ENCODE measurements at regions of chr6 and their contacts with region 1.

Region 1: DNA sequence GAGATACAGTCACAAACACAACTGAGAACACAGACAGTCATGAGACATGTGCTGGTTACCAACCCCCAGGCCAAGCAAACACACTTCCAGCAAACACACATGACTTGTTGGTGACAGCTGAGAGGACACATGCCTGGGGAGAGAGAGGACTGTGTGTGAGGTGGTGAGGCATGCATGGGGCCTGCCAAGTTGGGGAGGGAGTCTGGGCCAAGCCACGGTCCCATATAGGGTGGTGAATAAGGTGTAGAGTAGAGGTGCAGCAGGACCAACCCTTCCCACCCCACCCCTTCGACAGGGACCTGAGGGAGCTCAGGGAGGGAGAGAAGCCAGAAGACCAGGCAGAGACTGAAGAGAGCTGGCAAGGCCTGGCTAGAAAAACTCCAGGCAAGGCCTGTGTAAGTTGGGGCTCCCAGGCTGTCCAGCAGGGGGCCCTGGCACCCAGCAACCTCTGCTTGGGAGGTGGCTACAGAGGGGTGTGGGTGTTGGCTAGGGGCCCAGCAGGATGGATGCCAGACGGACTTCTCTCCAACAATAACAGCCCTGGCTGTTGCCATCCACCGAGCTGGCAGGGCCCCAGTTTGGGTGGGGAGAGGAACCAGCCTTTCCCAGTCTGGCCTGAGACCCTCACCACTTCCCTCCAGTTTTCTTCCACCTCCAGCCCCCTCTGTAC is 2.0 kb upstream of the SLC29A1 start:
- DNase-seq: peak; percentile 53 to 85 (median 72)
- ATAC-seq: peak; percentile 60
- H3K4me3 ChIP-seq: no peak overlapping the region
- H3K4me3 Mint-ChIP-seq: no peak overlapping the region
- H3K27ac ChIP-seq: no peak overlapping the region
- H3K27ac Mint-ChIP-seq: no peak overlapping the region
- H3K4me1 ChIP-seq: peaks cover 28% of the 10 kb centered on the region
- H3K4me1 Mint-ChIP-seq: peaks cover 41% of the 10 kb centered on the region
- H3K27me3 ChIP-seq: peaks cover 0 to 8% of the 10 kb centered on the region in 2 experiments
- H3K27me3 Mint-ChIP-seq: peaks cover 3% of the 10 kb centered on the region
- CTCF ChIP-seq: peak; percentile 47

Region 2: DNA sequence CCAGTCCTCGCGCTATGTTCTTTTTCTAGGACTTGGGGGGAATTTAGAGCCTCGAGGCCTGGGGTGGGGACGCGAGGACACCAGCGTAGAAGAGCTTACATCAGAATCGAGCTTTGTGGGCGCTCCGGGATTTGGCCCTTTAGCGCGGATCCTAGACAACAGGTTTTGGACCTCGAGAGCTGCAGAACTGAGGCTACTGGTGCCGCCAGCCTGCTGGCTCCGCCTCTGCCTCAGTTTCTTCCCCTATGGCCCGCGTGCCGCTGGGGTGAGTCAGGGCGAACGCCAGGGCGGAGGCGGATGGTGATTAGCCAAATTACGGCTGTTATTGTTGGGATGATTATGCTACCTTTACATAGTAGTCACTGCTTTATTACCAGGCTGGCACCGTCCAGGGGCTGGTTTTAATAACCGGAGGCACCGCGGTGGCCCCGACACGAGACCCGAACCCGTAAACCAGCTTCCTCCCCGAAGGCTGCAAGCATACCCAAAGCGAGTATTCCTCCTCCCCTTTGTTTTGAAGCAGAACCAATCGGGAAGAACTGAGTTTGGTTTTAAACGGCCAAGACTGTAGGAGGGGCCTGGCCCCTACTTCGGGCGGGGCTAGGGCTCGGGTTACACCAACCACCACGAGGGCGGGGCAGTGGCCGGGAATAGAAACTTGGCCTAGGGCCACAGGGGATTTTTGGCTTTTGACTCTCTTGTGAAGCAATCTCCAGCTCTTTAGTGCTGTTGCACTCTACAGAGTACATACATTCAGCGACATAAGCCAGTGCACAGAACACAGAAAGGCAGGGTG is 591.7 kb before region 1 on chr6:
- CTCF ChIA-PET with region 1: no interaction called
- POLR2A ChIA-PET with region 1: no interaction called
- intact Hi-C with region 1: loop called in 1 of 2 experiments (anchors 10 kb)
- DNase-seq: peak; percentile 66 to 96 (median 84)
- ATAC-seq: peak; percentile 51
- H3K4me3 ChIP-seq: peak overlapping the region; percentile 77 to 82
- H3K4me3 Mint-ChIP-seq: peak overlapping the region; percentile 98
- H3K27ac ChIP-seq: peak overlapping the region; percentile 53 to 75
- H3K27ac Mint-ChIP-seq: peak overlapping the region; percentile 95
- H3K4me1 ChIP-seq: peaks cover 15% of the 10 kb centered on the region
- H3K4me1 Mint-ChIP-seq: peaks cover 39% of the 10 kb centered on the region
- H3K27me3 ChIP-seq: no peaks in the 10 kb centered on the region
- H3K27me3 Mint-ChIP-seq: no peaks in the 10 kb centered on the region
- CTCF ChIP-seq: no peak

Region 3: GRCh38 chr6:44237813-44238433 is 16.5 kb after region 1 on chr6:
- CTCF ChIA-PET with region 1: interaction called, 23 read pairs
- POLR2A ChIA-PET with region 1: interaction called, 4 read pairs
- intact Hi-C with region 1: loop called (anchors 1 kb)
- DNase-seq: peak; percentile 62 to 89 (median 77)
- ATAC-seq: peak; percentile 91
- H3K4me3 ChIP-seq: peak overlapping the region; percentile 76 to 98
- H3K4me3 Mint-ChIP-seq: peak overlapping the region; percentile 88
- H3K27ac ChIP-seq: peak overlapping the region; percentile 88 to 95
- H3K27ac Mint-ChIP-seq: peak overlapping the region; percentile 93
- H3K4me1 ChIP-seq: peaks cover 12% of the 10 kb centered on the region
- H3K4me1 Mint-ChIP-seq: peaks cover 11% of the 10 kb centered on the region
- H3K27me3 ChIP-seq: no peaks in the 10 kb centered on the region
- H3K27me3 Mint-ChIP-seq: no peaks in the 10 kb centered on the region
- CTCF ChIP-seq: peak; percentile 93

Region 4: DNA sequence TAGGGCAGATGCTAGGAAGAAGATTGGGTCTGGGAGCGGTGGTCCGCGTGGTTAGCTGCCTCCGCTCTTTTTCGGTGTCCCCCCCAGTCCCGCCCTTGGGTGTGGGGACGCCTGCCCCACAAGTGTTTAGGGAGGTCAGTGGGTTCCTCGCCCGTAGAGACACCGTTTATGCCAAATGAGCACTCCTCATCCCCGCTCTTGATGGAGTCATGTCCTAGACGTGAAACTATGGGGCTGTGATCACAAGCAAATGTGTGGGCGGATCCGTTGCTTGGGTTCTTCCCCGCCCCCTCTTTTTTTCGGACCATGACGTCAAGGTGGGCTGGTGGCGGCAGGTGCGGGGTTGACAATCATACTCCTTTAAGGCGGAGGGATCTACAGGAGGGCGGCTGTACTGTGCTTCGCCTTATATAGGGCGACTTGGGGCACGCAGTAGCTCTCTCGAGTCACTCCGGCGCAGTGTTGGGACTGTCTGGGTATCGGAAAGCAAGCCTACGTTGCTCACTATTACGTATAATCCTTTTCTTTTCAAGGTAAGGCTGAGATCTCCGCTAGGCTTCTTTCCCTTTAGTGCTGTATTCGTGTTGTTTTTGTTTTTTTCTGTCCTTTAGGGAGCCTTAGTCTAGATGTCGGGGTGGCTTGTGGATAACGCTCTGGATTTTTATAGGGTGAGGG is 25.4 kb after region 1 on chr6 and contains the start of gene HSP90AB1:
- CTCF ChIA-PET with region 1: interaction called, 10 read pairs
- POLR2A ChIA-PET with region 1: interaction called, 59 read pairs
- intact Hi-C with region 1: loop called (anchors 1 kb)
- DNase-seq: peak; percentile 89 to 99 (median 94)
- ATAC-seq: peak; percentile 79
- H3K4me3 ChIP-seq: peak within 1 kb of the TSS; percentile 96 to 98
- H3K4me3 Mint-ChIP-seq: peak within 1 kb of the TSS; percentile 99
- H3K27ac ChIP-seq: peak within 1 kb of the TSS; percentile 95 to 96
- H3K27ac Mint-ChIP-seq: peak within 1 kb of the TSS; percentile 98
- H3K4me1 ChIP-seq: peaks cover 26% of the 10 kb centered on the region
- H3K4me1 Mint-ChIP-seq: peaks cover 50% of the 10 kb centered on the region
- H3K27me3 ChIP-seq: no peaks in the 10 kb centered on the region
- H3K27me3 Mint-ChIP-seq: no peaks in the 10 kb centered on the region
- CTCF ChIP-seq: no peak
- total RNA-seq, gene HSP90AB1: 561 to 585 TPM

Region 5: DNA sequence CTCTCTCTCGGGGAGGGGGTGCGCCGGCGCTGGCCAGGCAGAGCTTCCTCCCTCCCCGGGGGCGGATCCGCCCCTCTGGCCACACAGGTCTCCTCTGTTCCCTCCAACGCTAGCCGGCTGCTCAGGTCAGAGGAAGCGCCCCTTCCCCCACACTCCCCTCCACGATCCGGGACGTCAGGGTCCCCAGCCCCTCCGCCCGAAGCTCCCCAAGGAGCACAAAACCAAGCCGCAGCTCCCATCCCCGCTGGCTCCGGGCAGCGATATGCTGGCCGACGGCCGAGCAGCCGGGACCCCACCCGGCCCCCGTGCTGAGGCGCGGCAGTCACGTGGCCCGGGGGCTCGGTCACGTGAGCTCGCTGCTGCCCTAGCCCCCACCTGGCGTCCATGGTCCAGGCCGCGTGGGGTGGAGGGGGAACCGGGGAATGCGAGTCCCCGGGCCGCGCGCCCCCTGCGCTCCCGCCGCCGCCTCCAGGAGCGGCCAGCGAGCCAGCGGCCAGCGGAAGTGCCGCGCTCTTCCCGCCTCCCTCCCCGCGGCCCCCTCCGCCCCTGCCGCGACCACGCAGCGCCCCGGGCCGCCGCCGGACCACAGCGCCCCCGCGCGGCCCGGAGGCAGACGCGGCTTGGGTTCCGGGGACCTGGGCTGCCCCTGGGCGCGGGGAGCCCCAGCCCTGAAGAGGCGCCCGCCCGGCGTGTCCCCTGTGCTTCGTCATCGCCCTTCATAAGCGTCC is 35.8 kb after region 1 on chr6 and contains the start of gene SLC35B2:
- CTCF ChIA-PET with region 1: interaction called, 7 read pairs
- POLR2A ChIA-PET with region 1: interaction called, 10 read pairs
- intact Hi-C with region 1: loop called in 1 of 2 experiments (anchors 1 kb)
- DNase-seq: peak in 8 of 9 experiments; percentile 33 to 87 (median 64)
- ATAC-seq: peak; percentile 79
- H3K4me3 ChIP-seq: peak within 1 kb of the TSS; percentile 93 to 94
- H3K4me3 Mint-ChIP-seq: peak within 1 kb of the TSS; percentile 88
- H3K27ac ChIP-seq: peak within 1 kb of the TSS; percentile 47 to 86
- H3K27ac Mint-ChIP-seq: peak within 1 kb of the TSS; percentile 90
- H3K4me1 ChIP-seq: peaks cover 31% of the 10 kb centered on the region
- H3K4me1 Mint-ChIP-seq: peaks cover 51% of the 10 kb centered on the region
- H3K27me3 ChIP-seq: no peaks in the 10 kb centered on the region
- H3K27me3 Mint-ChIP-seq: no peaks in the 10 kb centered on the region
- CTCF ChIP-seq: peak; percentile 59
- total RNA-seq, gene SLC35B2: 6.3 to 6.4 TPM

Region 6: DNA sequence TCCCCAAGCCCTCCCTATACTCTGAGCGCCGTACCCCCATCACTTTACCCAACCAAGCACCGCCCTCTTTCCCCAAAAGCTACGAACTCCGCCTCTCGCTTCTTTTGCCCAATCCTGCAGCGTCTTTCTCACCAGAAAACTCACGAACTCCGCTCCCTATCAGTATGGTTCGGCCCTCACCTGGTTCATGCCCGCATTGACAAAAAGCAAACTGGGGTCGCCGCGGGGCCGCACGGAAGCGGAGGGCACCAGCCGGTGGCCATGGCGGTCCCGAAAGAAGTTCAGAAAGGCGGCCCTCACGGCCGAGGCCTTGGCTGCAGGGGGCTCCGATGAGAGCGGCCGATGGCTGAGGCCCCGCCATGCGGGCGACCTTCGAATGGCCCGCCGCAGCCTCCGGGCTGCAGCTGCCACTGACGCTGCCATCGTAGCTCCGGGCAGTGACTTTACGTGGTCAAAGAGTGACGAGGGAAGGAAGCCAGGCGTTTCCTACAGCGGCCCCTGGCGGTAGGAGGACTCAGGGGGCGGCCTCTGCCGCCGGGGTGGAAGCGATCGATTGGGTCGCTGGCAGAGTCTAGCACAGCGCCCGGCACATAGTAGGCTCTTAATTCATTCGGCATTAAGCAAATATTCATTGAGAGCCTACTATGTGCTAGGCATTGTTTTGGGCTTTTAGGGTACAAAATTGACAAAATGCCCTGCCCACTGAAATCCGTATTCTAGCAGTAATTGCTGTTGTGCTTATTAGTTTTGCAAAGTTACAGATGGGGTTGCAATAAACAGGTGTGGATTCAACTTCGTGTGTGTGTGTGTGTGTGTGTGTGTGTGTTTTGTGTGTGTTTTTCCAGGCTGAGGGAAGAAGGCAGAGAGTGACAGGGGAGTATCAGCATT is 91.7 kb after region 1 on chr6 and contains the start of gene AARS2:
- CTCF ChIA-PET with region 1: interaction called, 3 read pairs
- POLR2A ChIA-PET with region 1: no interaction called
- intact Hi-C with region 1: loop called in 1 of 2 experiments (anchors 1 kb)
- DNase-seq: peak; percentile 87 to 98 (median 91)
- ATAC-seq: peak; percentile 93
- H3K4me3 ChIP-seq: peak within 1 kb of the TSS; percentile 82 to 92
- H3K4me3 Mint-ChIP-seq: peak within 1 kb of the TSS; percentile 98
- H3K27ac ChIP-seq: peak within 1 kb of the TSS; percentile 66 to 78
- H3K27ac Mint-ChIP-seq: peak within 1 kb of the TSS; percentile 95
- H3K4me1 ChIP-seq: peaks cover 11% of the 10 kb centered on the region
- H3K4me1 Mint-ChIP-seq: peaks cover 13% of the 10 kb centered on the region
- H3K27me3 ChIP-seq: no peaks in the 10 kb centered on the region
- H3K27me3 Mint-ChIP-seq: peaks cover 6% of the 10 kb centered on the region
- CTCF ChIP-seq: peak; percentile 91
- total RNA-seq, gene AARS2: 13.5 to 14.7 TPM

Region 7: GRCh38 chr6:44338228-44339122 is 117.0 kb after region 1 on chr6:
- CTCF ChIA-PET with region 1: interaction called, 3 read pairs
- POLR2A ChIA-PET with region 1: no interaction called
- intact Hi-C with region 1: loop called in 1 of 2 experiments (anchors 2 kb)
- DNase-seq: peak; percentile 33 to 78 (median 63)
- ATAC-seq: peak; percentile 94
- H3K4me3 ChIP-seq: no peak overlapping the region
- H3K4me3 Mint-ChIP-seq: no peak overlapping the region
- H3K27ac ChIP-seq: no peak overlapping the region
- H3K27ac Mint-ChIP-seq: no peak overlapping the region
- H3K4me1 ChIP-seq: no peaks in the 10 kb centered on the region
- H3K4me1 Mint-ChIP-seq: no peaks in the 10 kb centered on the region
- H3K27me3 ChIP-seq: peaks cover 0 to 3% of the 10 kb centered on the region in 2 experiments
- H3K27me3 Mint-ChIP-seq: peaks cover 18% of the 10 kb centered on the region
- CTCF ChIP-seq: peak; percentile 78

Region 8: DNA sequence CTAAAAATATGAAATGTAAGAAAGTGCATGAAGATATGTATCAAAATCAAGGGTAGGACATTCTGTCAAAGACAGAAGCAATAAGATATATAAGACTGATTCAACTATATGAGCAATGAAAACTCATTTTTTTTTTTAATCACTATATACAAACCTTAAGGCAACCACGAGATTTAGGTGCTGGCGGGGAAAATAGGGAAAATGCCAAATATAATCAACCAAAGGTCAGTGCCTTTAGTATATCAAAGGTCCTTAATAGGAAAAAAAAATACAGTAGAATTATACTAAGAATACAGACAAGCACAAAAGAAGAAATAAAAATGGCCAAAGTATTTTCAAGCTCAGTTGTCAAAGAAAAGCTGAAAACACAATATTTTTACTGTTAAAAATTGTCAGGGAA is 1132.2 kb after region 1 on chr6:
- CTCF ChIA-PET with region 1: no interaction called
- POLR2A ChIA-PET with region 1: no interaction called
- intact Hi-C with region 1: no loop called
- DNase-seq: no peak
- ATAC-seq: no peak
- H3K4me3 ChIP-seq: no peak overlapping the region
- H3K4me3 Mint-ChIP-seq: no peak overlapping the region
- H3K27ac ChIP-seq: no peak overlapping the region
- H3K27ac Mint-ChIP-seq: no peak overlapping the region
- H3K4me1 ChIP-seq: peaks cover 15% of the 10 kb centered on the region
- H3K4me1 Mint-ChIP-seq: peaks cover 19% of the 10 kb centered on the region
- H3K27me3 ChIP-seq: no peaks in the 10 kb centered on the region
- H3K27me3 Mint-ChIP-seq: no peaks in the 10 kb centered on the region
- CTCF ChIP-seq: no peak

Measured in CD8-positive, alpha-beta T cell (primary cell).